Sigmoid colon (tissue), 7 donors: ENCODE measurements at regions of chr18 and their contacts with region 1.

Region 1: DNA sequence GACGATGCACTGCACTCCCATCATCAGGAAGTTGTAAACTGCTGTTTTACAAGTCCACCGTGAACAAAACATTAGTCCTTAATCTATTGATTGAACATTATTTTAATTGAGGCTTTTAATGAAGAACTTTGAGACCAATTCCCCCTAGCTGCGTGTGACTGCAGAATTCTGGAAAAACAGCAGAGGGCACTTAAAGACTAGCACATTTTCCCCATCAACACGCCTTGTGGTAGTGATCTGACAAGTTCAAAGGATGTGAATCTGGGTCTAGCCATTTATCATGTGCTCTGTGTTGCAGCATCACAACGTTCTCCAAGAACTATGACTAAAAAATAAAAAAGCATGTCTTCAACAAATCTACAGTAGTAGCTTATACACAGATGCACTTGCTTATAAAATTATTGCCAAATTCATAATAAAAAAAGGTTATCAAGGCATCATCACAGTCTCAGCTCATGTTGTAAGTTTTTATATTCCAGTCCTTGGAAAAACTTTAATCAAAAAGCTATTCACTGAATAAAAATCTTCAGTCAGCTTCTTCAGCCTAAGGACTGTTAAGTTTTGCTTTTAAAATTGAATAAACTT is 35.8 kb downstream of the SKOR2 start:
- DNase-seq: no peak
- H3K4me3 ChIP-seq: no peak overlapping the region
- H3K27ac ChIP-seq: no peak overlapping the region
- H3K4me1 ChIP-seq: no peaks in the 10 kb centered on the region
- H3K27me3 ChIP-seq: peaks cover 0 to 12% (median 0%) of the 10 kb centered on the region in 3 donors
- CTCF ChIP-seq: peak in 2 of 4 experiments; percentile 18 to 26
- EP300 ChIP-seq: no peak
- POLR2A ChIP-seq: no peak

Region 2: GRCh38 chr18:47389210-47389609 is 173.6 kb after region 1 on chr18:
- intact Hi-C with region 1: no loop called
- DNase-seq: no peak
- H3K4me3 ChIP-seq: no peak overlapping the region
- H3K27ac ChIP-seq: no peak overlapping the region
- H3K4me1 ChIP-seq: no peaks in the 10 kb centered on the region
- H3K27me3 ChIP-seq: no peaks in the 10 kb centered on the region
- CTCF ChIP-seq: no peak
- EP300 ChIP-seq: no peak
- POLR2A ChIP-seq: no peak

Region 3: GRCh38 chr18:47748847-47749599 is 533.4 kb after region 1 on chr18:
- intact Hi-C with region 1: loop called (anchors 5 kb)
- DNase-seq: peak; percentile 77
- H3K4me3 ChIP-seq: peak overlapping the region; percentile 14 to 43 (median 32)
- H3K27ac ChIP-seq: no peak overlapping the region
- H3K4me1 ChIP-seq: peaks cover 0 to 7% (median 4%) of the 10 kb centered on the region in 4 donors
- H3K27me3 ChIP-seq: peaks cover 0 to under 1% (median 0%) of the 10 kb centered on the region in 3 donors
- CTCF ChIP-seq: peak; percentile 63 to 100 (median 84)
- EP300 ChIP-seq: no peak
- POLR2A ChIP-seq: no peak